ENCODE measurements at regions of chr6 and their contacts with region 1.

Region 1: GRCh38 chr6:51959744-51960383 is 127.5 kb downstream of the PKHD1 start:
- DNase-seq: peak; percentile 34
- H3K4me3 ChIP-seq: no peak overlapping the region; a peak in 1 of 4 replicates
- H3K27ac ChIP-seq: peak overlapping the region in 1 of 2 experiments; percentile 91; a peak in 2 of 4 replicates
- H3K4me1 ChIP-seq: peaks cover 0 to 2% of the 10 kb centered on the region in 2 experiments; a peak in 1 of 4 replicates
- H3K27me3 ChIP-seq: no peaks in the 10 kb centered on the region
- CTCF ChIP-seq: peak; percentile 83
- EP300 ChIP-seq: no peak
- RAD21 ChIP-seq: peak; percentile 99

Region 2: DNA sequence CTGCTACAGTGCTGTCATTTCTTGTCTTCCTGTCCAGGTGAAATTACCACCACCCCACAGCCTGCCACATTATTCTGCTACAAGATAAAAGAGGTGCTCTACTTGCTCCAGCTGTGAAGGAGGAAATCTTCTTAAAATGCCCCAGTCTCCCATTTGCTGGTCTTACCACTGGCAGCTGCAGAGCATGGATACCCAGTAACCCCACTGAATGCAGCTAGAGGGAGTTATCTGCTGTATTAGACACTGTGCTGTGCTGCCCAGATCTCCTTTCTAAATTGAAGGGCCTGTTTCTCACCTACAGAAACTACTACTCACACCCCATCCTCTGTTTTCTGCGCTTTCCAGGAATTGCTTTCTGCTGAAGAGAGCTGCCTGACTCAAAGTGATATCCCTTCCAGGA is 390.3 kb before region 1 on chr6:
- CTCF ChIA-PET with region 1: interaction called, 13 read pairs
- POLR2A ChIA-PET with region 1: no interaction called
- DNase-seq: no peak
- H3K4me3 ChIP-seq: no peak overlapping the region
- H3K27ac ChIP-seq: peak overlapping the region in 1 of 2 experiments; percentile 88; a peak in 2 of 4 replicates
- H3K4me1 ChIP-seq: peaks cover 0 to 16% of the 10 kb centered on the region in 2 experiments; a peak in 2 of 4 replicates
- H3K27me3 ChIP-seq: no peaks in the 10 kb centered on the region; the same call in 1 of the 2 replicates
- CTCF ChIP-seq: no peak
- EP300 ChIP-seq: no peak
- RAD21 ChIP-seq: peak; percentile 68

Region 3: DNA sequence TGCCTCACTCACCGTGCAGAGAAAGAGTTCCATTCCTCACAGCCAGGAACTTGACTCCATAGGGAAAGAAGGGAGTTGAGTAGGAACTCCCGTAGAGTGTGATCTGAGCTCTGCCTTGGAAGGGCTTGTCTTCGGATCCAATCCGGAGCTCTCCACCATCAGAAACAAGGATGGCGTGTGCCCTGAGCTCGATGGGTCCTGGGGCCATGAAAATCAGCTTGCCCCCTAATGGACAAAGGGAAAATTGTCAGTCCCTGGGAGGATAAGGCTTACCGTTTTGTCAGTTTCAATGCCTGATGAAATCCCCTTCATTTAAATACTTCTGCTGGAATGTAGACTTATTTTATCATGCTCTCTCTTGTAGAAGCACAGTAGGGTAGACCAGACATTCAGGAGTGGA is 25.8 kb before region 1 on chr6:
- CTCF ChIA-PET with region 1: no interaction called
- POLR2A ChIA-PET with region 1: no interaction called
- DNase-seq: peak; percentile 14
- H3K4me3 ChIP-seq: no peak overlapping the region
- H3K27ac ChIP-seq: no peak overlapping the region
- H3K4me1 ChIP-seq: no peaks in the 10 kb centered on the region; a peak in 1 of 4 replicates
- H3K27me3 ChIP-seq: no peaks in the 10 kb centered on the region; the same call in 1 of the 2 replicates
- CTCF ChIP-seq: peak; percentile 46
- EP300 ChIP-seq: no peak
- RAD21 ChIP-seq: no peak

Region 4: DNA sequence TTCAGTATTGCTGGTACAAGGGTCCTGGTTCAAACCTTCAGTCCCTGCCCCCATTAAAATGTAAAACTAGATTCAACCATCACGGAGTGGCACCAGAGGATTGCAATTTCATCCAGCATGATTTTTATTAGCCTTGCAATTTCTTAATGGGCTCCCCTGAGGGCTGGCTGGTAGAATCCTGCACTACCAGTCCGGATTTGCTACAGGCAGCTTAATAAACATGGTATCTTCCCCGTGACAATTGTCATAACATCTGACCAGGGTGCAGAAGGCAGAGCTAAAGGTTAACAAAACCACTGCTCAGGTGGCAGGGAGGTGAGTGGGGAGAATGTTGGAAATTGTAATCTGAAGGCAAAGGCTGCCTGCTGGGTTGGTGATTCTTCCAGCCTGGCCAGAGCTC is 33.0 kb after region 1 on chr6:
- CTCF ChIA-PET with region 1: interaction called, 11 read pairs
- POLR2A ChIA-PET with region 1: no interaction called
- DNase-seq: peak; percentile 61
- H3K4me3 ChIP-seq: no peak overlapping the region
- H3K27ac ChIP-seq: peak overlapping the region in 1 of 2 experiments; percentile 98; a peak in 2 of 4 replicates
- H3K4me1 ChIP-seq: peaks cover 0 to 23% of the 10 kb centered on the region in 2 experiments; a peak in 2 of 4 replicates
- H3K27me3 ChIP-seq: no peaks in the 10 kb centered on the region
- CTCF ChIP-seq: no peak
- EP300 ChIP-seq: peak in 1 of 2 experiments; percentile 63; a peak in 1 of 4 replicates
- RAD21 ChIP-seq: peak; percentile 46

Region 5: DNA sequence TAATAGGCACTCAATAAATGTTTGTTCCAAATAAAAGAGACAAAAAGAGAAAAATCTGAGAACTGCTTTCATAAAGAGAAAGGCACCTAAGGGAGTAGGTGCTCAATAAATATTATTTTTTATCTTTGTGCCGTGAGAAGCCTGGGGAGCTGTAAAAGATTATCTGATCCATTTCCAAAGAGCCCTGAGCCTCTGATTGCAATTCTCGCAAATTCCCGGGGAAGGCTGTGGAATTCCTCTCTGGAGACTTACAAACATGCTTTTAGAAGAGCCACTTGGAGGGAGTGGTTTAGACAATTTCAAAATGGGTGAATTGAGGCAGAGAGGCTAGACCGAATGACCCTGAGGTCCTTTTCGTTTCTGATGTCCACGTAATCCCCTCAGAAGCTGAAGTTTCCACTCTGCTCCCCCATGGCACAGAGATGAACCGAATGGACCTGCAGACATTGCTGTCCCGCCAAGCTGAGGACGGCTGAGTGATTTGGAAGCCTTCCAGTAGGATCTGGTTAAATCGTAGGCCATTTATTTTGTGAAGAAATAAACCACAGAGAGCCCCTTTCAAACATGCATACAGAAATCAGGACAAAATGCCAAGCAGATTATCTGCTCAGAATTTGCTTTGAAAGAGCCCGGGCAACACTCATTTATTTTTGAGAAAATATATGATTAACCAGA is 49.7 kb after region 1 on chr6:
- CTCF ChIA-PET with region 1: interaction called, 11 read pairs
- POLR2A ChIA-PET with region 1: no interaction called
- DNase-seq: peak; percentile 53
- H3K4me3 ChIP-seq: no peak overlapping the region; a peak in 1 of 4 replicates
- H3K27ac ChIP-seq: peak overlapping the region in 1 of 2 experiments; percentile 100; a peak in 2 of 4 replicates
- H3K4me1 ChIP-seq: peaks cover 0 to 34% of the 10 kb centered on the region in 2 experiments; a peak in 2 of 4 replicates
- H3K27me3 ChIP-seq: no peaks in the 10 kb centered on the region; the same call in 1 of the 2 replicates
- CTCF ChIP-seq: no peak
- EP300 ChIP-seq: no peak; a peak in 1 of 4 replicates
- RAD21 ChIP-seq: no peak

Region 6: DNA sequence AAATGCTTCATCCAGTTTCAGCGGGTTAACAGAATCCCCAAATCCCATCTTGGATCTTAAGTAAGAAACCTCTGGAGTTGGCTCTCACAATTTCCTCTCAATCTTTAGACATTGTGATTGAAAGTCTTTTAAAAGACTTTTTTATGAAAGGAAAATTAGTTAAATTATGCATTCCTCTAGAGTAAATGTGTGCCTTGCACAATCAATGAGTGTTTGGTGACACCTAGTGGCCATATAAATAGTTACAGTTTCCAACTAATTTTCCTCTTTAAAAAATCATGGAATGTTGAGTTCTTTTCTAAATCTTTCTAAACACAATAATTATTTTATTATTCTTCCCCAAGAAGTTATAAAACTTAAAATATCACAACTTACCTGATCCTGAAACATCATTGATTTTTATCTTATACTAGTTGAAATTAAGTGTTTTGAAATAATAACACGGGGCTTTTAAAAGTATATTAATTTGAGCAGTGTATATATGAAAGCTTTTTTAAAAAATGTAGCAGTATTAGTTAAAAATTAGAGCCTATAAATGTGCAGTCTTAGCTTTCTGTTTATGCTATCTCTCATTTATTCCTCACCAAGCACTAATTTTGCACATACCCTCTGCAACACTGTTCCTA is 61.2 kb after region 1 on chr6:
- CTCF ChIA-PET with region 1: interaction called, 55 read pairs
- POLR2A ChIA-PET with region 1: interaction called, 4 read pairs
- DNase-seq: peak; percentile 14
- H3K4me3 ChIP-seq: no peak overlapping the region; a peak in 1 of 4 replicates
- H3K27ac ChIP-seq: peak overlapping the region in 1 of 2 experiments; percentile 99; a peak in 2 of 4 replicates
- H3K4me1 ChIP-seq: peaks cover 0 to 31% of the 10 kb centered on the region in 2 experiments; a peak in 2 of 4 replicates
- H3K27me3 ChIP-seq: no peaks in the 10 kb centered on the region; the same call in 1 of the 2 replicates
- CTCF ChIP-seq: peak; percentile 87
- EP300 ChIP-seq: no peak
- RAD21 ChIP-seq: peak; percentile 91

Measured in SK-N-SH (cell line).